ENCODE measurements at regions of chr14 and their contacts with region 1.

Region 1: GRCh38 chr14:81220830-81221578 is at the start of gene GTF2A1:
- DNase-seq: peak; percentile 94
- H3K4me3 Mint-ChIP-seq: peak within 1 kb of the TSS; percentile 93
- H3K27ac Mint-ChIP-seq: peak within 1 kb of the TSS; percentile 99
- H3K4me1 Mint-ChIP-seq: peaks cover 6% of the 10 kb centered on the region
- H3K27me3 Mint-ChIP-seq: no peaks in the 10 kb centered on the region
- CTCF ChIP-seq: no peak
- total RNA-seq, gene GTF2A1: 35.0 and 49.4 TPM in 2 replicates

Region 2: DNA sequence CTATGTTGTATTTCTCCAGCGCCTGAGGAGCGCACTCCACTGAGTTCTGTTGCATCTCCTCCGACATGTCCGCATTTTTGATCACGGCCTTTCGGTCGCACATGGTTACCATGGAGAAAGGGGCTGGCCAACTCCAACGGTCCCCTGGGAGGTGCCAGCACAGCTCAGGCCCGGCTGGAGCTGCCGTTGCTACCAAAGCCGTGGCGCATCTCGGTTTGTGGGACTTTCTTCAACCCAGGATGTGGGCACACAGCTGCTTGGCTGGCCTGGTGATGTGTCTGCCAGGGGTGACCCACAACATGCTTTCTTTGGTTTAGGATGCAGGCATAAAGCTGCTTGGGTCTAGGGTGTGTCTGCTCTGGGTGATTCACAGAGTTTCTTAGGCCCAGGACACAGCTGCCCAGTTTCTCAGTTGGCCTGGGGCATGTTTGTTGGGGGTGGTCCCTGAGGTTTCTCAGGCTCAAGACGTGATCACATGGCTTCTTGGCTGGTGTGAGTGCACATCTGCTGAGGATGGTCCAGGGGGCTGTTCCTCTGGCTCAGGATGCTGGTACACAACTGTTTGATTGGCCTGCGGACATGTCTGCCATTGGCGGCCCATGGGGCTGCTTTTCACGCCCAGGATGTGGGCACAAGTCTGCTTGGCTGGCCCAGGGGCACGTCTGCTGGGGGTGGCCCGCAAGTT is 25.6 kb after region 1 on chr14:
- CTCF ChIA-PET with region 1: interaction called, 3 read pairs
- POLR2A ChIA-PET with region 1: interaction called, 4 read pairs
- intact Hi-C with region 1: loop called (anchors 2 kb)
- DNase-seq: peak; percentile 16
- H3K4me3 Mint-ChIP-seq: no peak overlapping the region
- H3K27ac Mint-ChIP-seq: no peak overlapping the region
- H3K4me1 Mint-ChIP-seq: no peaks in the 10 kb centered on the region
- H3K27me3 Mint-ChIP-seq: no peaks in the 10 kb centered on the region
- CTCF ChIP-seq: no peak

Region 3: DNA sequence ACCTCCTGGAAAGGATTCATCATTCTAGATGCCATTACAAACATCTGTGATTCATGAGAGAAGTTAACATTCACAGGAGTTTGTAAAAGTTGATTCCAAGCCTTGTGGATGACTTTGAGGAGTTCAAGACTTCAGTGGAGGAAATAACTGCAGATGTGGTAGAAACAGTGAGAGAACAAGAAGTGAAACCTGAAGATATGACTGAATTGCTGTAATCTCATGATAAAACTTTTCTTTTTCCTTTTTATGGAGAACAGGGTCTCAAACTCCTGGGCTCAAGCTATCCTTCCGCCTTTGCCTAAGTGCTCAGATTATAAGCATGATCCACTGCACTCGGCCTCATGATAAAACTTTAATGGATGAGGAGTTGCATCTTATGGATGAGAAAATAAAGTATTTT is 64.2 kb after region 1 on chr14:
- CTCF ChIA-PET with region 1: no interaction called
- POLR2A ChIA-PET with region 1: no interaction called
- intact Hi-C with region 1: no loop called
- DNase-seq: no peak
- H3K4me3 Mint-ChIP-seq: no peak overlapping the region
- H3K27ac Mint-ChIP-seq: no peak overlapping the region
- H3K4me1 Mint-ChIP-seq: peaks cover 5% of the 10 kb centered on the region
- H3K27me3 Mint-ChIP-seq: no peaks in the 10 kb centered on the region
- CTCF ChIP-seq: no peak

Measured in MCF 10A (cell line).